Esophagus squamous epithelium (tissue), 5 donors: ENCODE measurements at regions of chr9 and their contacts with region 1.

Region 1: DNA sequence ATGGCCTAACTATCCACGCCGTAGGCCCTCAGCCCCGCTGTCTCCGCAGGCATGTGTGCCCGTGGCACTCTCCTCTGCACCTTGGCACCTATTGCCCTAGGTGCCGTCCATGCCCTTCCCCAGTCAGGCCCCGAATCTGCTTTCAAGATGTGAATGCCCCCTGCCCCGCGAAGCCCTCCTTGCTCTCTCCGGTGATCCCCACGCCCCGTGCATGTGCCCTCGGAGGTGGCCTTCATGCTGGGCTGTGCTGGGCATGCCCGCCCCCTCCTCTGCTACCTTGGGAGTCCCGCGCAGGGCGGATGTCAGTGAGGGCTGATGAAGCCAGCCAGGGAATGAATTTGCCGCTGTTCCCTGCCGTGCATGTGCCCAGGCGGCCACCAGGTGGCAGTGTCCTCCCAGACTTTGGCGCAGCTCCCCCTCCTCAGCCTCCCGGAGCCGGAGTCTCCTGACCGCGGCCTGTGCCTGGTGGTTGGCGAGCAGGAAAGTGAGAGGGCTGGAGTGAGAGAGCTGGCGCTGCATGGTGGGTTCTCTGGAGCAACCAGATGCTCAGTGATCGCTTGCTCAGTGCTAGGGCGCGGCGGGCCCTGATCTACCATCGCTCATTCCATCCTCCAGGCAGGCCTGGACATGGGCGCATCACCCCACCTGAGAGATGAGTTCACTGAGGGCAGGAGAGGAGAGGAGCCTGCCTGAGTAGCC is 112.9 kb upstream of the LMX1B start:
- DNase-seq: no peak
- H3K4me3 ChIP-seq: no peak overlapping the region
- H3K27ac ChIP-seq: peak overlapping the region in 2 of 4 donors; percentile 86
- H3K4me1 ChIP-seq: peaks cover 14 to 37% (median 25%) of the 10 kb centered on the region in 3 donors
- H3K27me3 ChIP-seq: peaks cover 0 to 16% (median 0%) of the 10 kb centered on the region in 4 donors
- CTCF ChIP-seq: peak; percentile 91 to 97 (median 94)
- POLR2A ChIP-seq: no peak

Region 2: DNA sequence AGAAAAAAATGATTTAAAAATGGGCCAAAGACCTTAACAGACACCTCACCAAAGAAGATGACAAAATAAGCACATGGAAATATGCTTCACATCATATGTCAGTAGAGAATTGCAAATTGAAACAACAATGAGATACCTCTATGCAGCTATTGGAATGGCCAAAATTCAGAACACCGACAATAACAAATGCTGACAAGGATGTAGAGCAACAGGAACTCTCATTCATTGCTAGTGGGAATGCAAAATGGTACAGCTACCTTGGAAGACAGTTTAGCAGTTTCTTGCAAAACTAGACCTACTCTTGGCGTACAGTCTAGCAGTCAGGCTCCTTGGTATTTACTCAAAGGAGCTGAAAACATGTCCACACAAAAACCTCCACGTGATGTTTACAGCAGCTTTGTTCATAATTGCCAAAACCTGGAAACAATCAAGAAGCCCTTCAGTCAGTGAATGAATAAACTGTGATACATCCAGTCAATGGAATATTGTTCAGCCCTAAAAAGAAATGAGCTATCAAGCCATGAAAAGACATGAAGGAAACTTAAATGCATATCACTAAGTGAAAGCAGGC is 184.7 kb before region 1 on chr9:
- intact Hi-C with region 1: no loop called
- DNase-seq: no peak
- H3K4me3 ChIP-seq: no peak overlapping the region
- H3K27ac ChIP-seq: no peak overlapping the region
- H3K4me1 ChIP-seq: no peaks in the 10 kb centered on the region
- H3K27me3 ChIP-seq: no peaks in the 10 kb centered on the region
- CTCF ChIP-seq: no peak
- POLR2A ChIP-seq: no peak

Region 3: GRCh38 chr9:126558051-126558665 is 57.3 kb after region 1 on chr9:
- intact Hi-C with region 1: loop called (anchors 5 kb)
- DNase-seq: no peak
- H3K4me3 ChIP-seq: no peak overlapping the region
- H3K27ac ChIP-seq: no peak overlapping the region
- H3K4me1 ChIP-seq: no peaks in the 10 kb centered on the region
- H3K27me3 ChIP-seq: peaks cover 0 to 48% (median 0%) of the 10 kb centered on the region in 4 donors
- CTCF ChIP-seq: peak; percentile 93 to 97 (median 96)
- POLR2A ChIP-seq: no peak